ENCODE measurements at regions of chr3 and their contacts with region 1.

Region 1: GRCh38 chr3:108662130-108662738 is 72.7 kb downstream of the DZIP3 start:
- DNase-seq: peak; percentile 11
- ATAC-seq: peak; percentile 89
- H3K4me3 ChIP-seq: no peak overlapping the region
- H3K27ac ChIP-seq: no peak overlapping the region
- H3K4me1 ChIP-seq: no peaks in the 10 kb centered on the region
- H3K27me3 ChIP-seq: no peaks in the 10 kb centered on the region
- CTCF ChIP-seq: peak; percentile 63 to 77 (median 68)
- EP300 ChIP-seq: no peak
- POLR2A ChIP-seq: no peak
- RAD21 ChIP-seq: peak; percentile 91

Region 2: DNA sequence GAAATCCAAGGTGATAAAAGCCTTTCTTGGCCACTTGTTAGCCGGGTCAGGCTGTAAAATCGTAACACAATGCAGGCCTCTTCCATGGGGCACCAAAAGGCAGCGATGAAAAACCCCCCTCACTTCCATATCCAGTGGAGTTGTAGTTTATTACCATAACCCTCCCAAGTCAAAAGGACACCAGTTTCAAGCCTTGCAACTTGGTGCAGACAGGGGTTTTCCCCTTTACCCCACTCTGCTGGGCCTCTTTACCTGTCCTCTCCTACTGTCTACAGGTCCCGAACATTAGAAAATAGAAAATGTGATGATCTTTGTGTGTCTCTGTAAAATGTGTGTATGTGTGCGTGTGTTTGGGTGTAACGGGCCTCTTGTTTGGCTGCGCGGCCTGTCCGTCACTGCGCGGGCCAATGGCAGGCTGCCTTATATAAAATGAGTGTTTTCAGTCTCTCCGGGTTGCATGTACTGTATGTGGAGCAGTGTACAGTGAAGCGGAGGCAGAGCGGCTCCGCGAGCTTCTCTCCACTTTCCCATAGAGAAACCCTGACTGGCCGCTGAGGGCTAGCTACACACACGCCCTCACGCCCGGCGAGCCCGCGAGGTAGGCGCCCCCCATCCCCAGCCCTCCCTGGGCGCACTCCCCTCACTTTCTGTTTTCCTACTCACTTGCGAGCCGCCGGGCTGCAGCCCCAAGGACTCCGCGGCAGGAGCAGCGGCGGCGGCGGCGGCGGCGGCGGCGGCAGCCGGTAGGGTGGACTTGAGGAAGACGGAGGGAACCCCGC is 1139.5 kb before region 1 on chr3 and contains the start of gene BBX:
- CTCF ChIA-PET with region 1: no interaction called
- POLR2A ChIA-PET with region 1: no interaction called
- RAD21 ChIA-PET with region 1: no interaction called
- SMC1A ChIA-PET with region 1: no interaction called
- in situ Hi-C with region 1: no loop called
- intact Hi-C with region 1: no loop called
- DNase-seq: peak; percentile 97
- ATAC-seq: peak; percentile 89
- H3K4me3 ChIP-seq: peak within 1 kb of the TSS; percentile 85
- H3K27ac ChIP-seq: peak within 1 kb of the TSS; percentile 84
- H3K4me1 ChIP-seq: peaks cover 10% of the 10 kb centered on the region; the same call in 1 of the 2 replicates
- H3K27me3 ChIP-seq: no peaks in the 10 kb centered on the region
- CTCF ChIP-seq: no peak
- EP300 ChIP-seq: no peak
- POLR2A ChIP-seq: peak; percentile 75
- RAD21 ChIP-seq: no peak
- polyA plus RNA-seq, gene BBX: 17.5 to 37.3 TPM

Region 3: DNA sequence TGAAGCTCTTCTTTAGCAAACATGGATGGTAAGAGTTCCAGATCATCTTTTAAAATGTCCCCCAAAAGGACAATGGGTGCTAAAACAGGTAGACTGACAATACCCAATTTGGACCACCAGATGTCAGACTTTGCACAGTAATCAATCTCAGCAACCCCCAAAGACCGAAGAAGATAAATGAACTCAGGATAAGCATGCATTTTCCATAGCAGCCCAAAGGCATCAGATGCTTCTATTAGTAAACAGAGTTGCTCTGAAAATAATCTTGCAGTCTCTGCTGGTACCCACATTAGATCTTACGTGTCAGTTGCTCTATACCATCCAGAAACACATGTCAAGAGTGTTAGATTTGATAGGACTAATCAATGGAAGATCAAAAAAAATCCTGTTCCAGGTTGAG is 172.5 kb before region 1 on chr3:
- CTCF ChIA-PET with region 1: interaction called, 4 read pairs
- POLR2A ChIA-PET with region 1: no interaction called
- RAD21 ChIA-PET with region 1: no interaction called
- SMC1A ChIA-PET with region 1: no interaction called
- in situ Hi-C with region 1: no loop called
- intact Hi-C with region 1: loop called (anchors 1 kb)
- DNase-seq: peak; percentile 31
- ATAC-seq: peak; percentile 90
- H3K4me3 ChIP-seq: no peak overlapping the region
- H3K27ac ChIP-seq: no peak overlapping the region
- H3K4me1 ChIP-seq: no peaks in the 10 kb centered on the region
- H3K27me3 ChIP-seq: no peaks in the 10 kb centered on the region
- CTCF ChIP-seq: peak; percentile 69 to 79 (median 70)
- EP300 ChIP-seq: no peak
- POLR2A ChIP-seq: no peak
- RAD21 ChIP-seq: peak; percentile 97

Region 4: GRCh38 chr3:108818404-108818803 is 156.2 kb after region 1 on chr3:
- CTCF ChIA-PET with region 1: interaction called, 4 read pairs
- POLR2A ChIA-PET with region 1: no interaction called
- RAD21 ChIA-PET with region 1: interaction called, 3 read pairs
- SMC1A ChIA-PET with region 1: no interaction called
- in situ Hi-C with region 1: no loop called
- intact Hi-C with region 1: loop called (anchors 2 kb)
- DNase-seq: no peak
- ATAC-seq: peak; percentile 92
- H3K4me3 ChIP-seq: no peak overlapping the region
- H3K27ac ChIP-seq: no peak overlapping the region
- H3K4me1 ChIP-seq: no peaks in the 10 kb centered on the region
- H3K27me3 ChIP-seq: no peaks in the 10 kb centered on the region
- CTCF ChIP-seq: peak; percentile 54 to 60 (median 57); a peak in 4 of 6 replicates
- EP300 ChIP-seq: no peak
- POLR2A ChIP-seq: no peak
- RAD21 ChIP-seq: peak; percentile 63